ENCODE measurements at regions of chr1 and their contacts with region 1.

Region 1: GRCh38 chr1:24861821-24862727 is 68.0 kb downstream of the RUNX3 start:
- DNase-seq: no peak
- ATAC-seq: peak; percentile 45; the same call in 1 of the 2 replicates
- H3K4me3 ChIP-seq: no peak overlapping the region
- H3K27ac ChIP-seq: no peak overlapping the region
- H3K4me1 ChIP-seq: no peaks in the 10 kb centered on the region
- H3K27me3 ChIP-seq: peaks cover 31% of the 10 kb centered on the region
- CTCF ChIP-seq: peak; percentile 11; the same call in 1 of the 2 replicates
- POLR2A ChIP-seq: no peak
- RAD21 ChIP-seq: no peak

Region 2: DNA sequence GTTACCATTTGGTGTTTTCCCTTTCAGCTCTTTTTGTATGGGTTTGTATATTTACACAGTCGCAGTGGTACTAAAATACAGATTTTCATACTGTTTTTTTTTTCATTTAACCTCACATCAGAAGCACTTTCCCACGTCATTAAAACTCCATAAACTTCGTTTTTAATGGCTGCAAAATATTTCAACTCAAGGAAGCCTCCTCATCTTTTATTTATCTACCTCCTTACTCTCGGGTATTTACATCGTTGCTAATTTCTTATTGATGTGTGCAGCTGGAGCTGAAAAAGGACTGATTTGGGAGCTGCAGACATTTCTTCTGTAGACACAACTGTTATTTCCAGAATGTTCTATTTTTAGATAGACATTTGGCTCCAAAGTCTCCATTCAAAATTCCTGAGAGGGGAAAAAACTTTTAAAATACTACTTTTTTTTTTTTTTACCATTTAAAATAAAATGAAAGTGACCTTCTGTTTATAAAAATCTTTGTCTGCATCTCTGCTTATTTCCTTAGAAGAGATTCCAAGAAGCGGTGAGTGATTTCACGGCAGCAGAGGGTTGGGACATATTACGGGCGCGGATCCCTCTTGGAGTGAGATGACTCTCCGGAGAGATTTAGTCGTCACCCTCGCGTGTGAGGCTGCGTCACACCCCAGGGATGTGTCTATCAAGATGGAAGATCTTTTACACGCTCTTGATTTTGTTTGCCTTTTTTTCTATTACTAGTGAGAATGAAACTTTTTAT is 57.9 kb after region 1 on chr1:
- CTCF ChIA-PET with region 1: no interaction called
- POLR2A ChIA-PET with region 1: no interaction called
- dilution Hi-C with region 1: no loop called
- in situ Hi-C with region 1: no loop called
- intact Hi-C with region 1: loop called (anchors 5 kb)
- DNase-seq: peak; percentile 74
- ATAC-seq: peak; percentile 81
- H3K4me3 ChIP-seq: peak overlapping the region; percentile 6; the same call in 1 of the 2 replicates
- H3K27ac ChIP-seq: no peak overlapping the region
- H3K4me1 ChIP-seq: no peaks in the 10 kb centered on the region
- H3K27me3 ChIP-seq: peaks cover 21% of the 10 kb centered on the region
- CTCF ChIP-seq: no peak
- POLR2A ChIP-seq: no peak
- RAD21 ChIP-seq: no peak

Region 3: DNA sequence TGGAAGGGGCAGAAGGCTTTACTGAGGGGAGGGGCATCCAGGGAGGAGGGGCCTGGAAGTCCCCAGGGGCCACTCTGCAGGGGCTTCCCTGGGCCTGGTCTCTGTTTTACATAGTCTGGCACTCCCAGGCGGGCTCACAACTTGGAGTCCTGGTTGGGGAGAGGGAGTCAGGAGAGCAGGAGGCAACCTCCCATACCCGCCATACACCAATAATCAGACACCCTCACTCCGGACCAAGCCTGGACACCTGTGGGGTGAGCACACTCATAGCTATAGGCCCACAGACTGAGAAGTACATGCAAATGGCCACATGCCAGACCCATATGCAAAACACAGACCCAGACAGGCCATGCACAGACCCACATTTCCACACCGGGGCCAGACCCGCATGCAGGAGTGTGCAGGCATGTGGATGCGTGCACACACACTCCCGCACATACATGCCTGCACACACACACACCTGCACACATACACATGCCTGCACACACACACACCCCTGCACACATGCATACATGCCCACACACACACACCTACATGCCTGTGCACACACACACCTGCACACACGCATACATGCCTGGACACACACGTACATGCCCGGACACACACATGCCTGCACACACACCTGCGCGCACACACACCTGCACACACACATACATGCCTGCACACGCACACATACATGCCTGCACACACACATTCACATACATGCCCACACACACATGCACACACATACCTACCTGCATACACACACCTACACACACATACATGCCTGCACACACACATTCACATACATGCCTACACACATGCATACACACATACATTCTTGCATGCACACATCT is 157.5 kb after region 1 on chr1:
- CTCF ChIA-PET with region 1: no interaction called
- POLR2A ChIA-PET with region 1: no interaction called
- dilution Hi-C with region 1: no loop called
- in situ Hi-C with region 1: no loop called
- intact Hi-C with region 1: no loop called
- DNase-seq: no peak
- ATAC-seq: no peak
- H3K4me3 ChIP-seq: no peak overlapping the region
- H3K27ac ChIP-seq: no peak overlapping the region
- H3K4me1 ChIP-seq: peaks cover 22% of the 10 kb centered on the region
- H3K27me3 ChIP-seq: no peaks in the 10 kb centered on the region
- CTCF ChIP-seq: no peak
- POLR2A ChIP-seq: no peak
- RAD21 ChIP-seq: no peak

Measured in IMR-90 (cell line).